A549 (cell line): ENCODE measurements at regions of chr17 and their contacts with region 1.

Region 1: GRCh38 chr17:50087246-50087911 is 7.8 kb upstream of the PDK2 start:
- DNase-seq: peak; percentile 87 to 93
- ATAC-seq: peak; percentile 76 to 93
- H3K4me3 ChIP-seq: no peak overlapping the region
- H3K27ac ChIP-seq: peak overlapping the region in 1 of 2 experiments; percentile 37; a peak in 2 of 6 replicates
- H3K4me1 ChIP-seq: no peaks in the 10 kb centered on the region
- CTCF ChIP-seq: peak; percentile 97
- EP300 ChIP-seq: no peak
- POLR2A ChIP-seq: no peak
- RAD21 ChIP-seq: peak; percentile 97 to 99

Region 2: DNA sequence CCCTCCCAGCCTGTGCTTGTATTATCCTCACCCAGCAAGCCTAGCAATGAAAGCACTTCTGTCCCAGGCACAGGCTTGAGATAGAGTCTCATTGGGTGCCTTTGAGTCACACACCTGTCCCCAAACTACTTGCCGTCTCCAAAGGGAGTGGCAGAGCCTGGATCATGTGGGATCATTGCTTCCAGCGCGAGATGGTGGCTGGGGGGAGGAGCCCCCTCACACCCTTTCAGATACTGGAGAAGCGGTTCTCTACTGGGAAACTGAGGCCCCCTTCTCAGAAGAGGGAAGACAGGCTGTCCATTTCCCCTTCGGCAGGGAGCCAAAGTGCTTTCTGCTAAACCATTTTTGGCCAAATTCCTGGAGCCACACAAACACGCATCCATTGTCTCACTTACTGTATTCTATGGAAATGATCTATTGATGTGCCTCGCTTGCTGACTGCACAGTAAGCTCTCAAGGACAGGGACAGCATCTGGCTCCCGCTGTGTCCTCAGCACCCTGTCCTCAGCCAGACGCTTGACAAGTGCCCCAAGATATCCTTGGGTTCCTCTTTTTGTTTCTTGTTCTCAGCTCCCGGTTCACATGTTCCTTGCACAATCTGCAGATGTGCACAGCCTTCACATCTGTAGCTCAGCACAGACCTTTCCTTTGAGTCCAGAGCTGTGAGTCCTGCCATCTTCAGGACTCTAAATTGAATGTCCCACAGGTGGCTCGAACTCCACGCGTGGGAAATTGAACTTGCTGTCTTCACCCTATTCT is 66.4 kb before region 1 on chr17:
- CTCF ChIA-PET with region 1: interaction called, 200 read pairs
- POLR2A ChIA-PET with region 1: no interaction called
- DNase-seq: no peak
- ATAC-seq: 0 out of 6 replicates have a peak, but pooled peaks of 1 of the 2 experiments have one; percentile 40
- H3K4me3 ChIP-seq: no peak overlapping the region
- H3K27ac ChIP-seq: no peak overlapping the region
- H3K4me1 ChIP-seq: peaks cover under 1% of the 10 kb centered on the region; the same call in 1 of the 3 replicates
- CTCF ChIP-seq: no peak
- EP300 ChIP-seq: no peak
- POLR2A ChIP-seq: no peak
- RAD21 ChIP-seq: no peak

Region 3: DNA sequence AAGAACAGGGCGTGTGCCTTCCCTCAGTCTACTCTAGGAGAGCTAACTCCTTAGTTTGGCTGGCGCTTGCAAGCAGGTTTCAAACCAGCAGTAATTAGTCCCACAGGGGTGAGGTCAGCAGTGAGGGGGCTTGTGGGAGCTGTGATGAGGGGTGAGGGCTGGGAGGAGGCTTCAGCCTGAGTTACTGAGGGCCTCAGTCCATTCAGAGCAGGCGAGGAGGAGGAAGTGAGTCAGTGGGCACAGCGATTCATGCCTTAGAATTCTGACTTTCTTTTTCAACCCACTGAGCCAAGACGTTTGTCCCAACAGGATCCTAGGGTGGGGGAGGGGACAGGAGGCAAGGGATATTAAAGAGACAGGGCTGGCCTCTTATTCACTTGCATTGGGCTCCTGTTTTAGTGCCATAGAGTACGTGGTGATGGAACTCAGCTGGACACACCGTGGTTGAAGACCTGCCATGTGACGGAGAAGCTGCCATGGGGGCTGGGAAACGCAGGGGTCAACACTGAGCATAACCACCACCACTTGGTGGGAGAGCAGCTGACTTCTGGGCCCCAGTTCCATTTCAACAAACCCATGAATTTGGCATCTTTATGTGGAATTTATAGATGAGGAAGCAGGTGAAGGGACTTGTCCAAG is 39.8 kb before region 1 on chr17:
- CTCF ChIA-PET with region 1: interaction called, 285 read pairs
- POLR2A ChIA-PET with region 1: interaction called, 5 read pairs
- DNase-seq: peak in 1 of 2 experiments; percentile 49
- ATAC-seq: peak in 1 of 2 experiments; percentile 5; a peak in 1 of 6 replicates
- H3K4me3 ChIP-seq: no peak overlapping the region
- H3K27ac ChIP-seq: peak overlapping the region; percentile 64 to 92
- H3K4me1 ChIP-seq: peaks cover 92% of the 10 kb centered on the region
- CTCF ChIP-seq: no peak
- EP300 ChIP-seq: no peak
- POLR2A ChIP-seq: no peak
- RAD21 ChIP-seq: no peak

Region 4: DNA sequence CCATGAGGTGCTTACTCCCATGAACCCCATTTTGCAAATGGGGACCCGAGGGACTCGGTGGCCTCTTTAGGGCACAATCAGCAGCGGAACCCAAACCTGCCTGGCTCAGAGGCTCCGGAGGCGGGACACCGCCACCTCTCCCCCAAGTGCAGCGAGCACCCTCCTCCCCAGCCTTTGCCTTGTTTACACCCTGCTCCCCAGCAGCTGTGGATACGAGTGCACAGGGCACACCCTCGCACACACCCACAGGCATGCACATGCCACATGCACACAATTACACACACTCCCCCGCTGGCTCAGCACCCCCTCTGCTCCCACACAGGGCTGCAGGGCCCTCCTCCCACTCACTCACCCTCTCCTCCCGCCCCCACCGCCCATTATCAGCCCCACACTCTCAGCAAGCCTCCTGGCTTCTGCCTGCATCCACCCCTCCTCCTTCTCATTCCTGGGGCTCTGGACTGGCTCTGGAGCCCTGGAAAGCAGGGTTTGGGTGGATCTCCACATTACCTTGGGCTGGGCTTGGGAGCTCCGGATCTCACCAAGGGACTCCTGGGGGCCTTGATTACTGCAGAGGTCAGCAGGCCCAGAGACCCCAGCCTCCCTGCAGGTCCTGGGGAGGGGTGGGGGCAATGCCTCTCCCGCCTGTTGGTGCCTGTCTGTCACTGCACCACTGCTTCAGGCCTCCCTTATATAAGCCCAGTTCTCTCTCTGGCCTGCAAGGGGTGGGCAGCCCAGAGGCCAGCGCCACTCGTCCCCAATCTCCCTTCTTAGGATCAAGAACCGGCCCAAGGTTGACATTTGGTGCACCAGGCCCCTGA is 14.2 kb after region 1 on chr17:
- CTCF ChIA-PET with region 1: interaction called, 1,356 read pairs
- POLR2A ChIA-PET with region 1: no interaction called
- DNase-seq: no peak
- ATAC-seq: peak; percentile 27 to 63
- H3K4me3 ChIP-seq: no peak overlapping the region
- H3K27ac ChIP-seq: peak overlapping the region in 1 of 2 experiments; percentile 68; a peak in 3 of 6 replicates
- H3K4me1 ChIP-seq: peaks cover 29% of the 10 kb centered on the region
- CTCF ChIP-seq: no peak
- EP300 ChIP-seq: no peak
- POLR2A ChIP-seq: no peak
- RAD21 ChIP-seq: no peak

Region 5: GRCh38 chr17:50123649-50124349 is 36.4 kb after region 1 on chr17:
- CTCF ChIA-PET with region 1: interaction called, 1,356 read pairs
- POLR2A ChIA-PET with region 1: no interaction called
- DNase-seq: no peak
- ATAC-seq: peak in 1 of 2 experiments; percentile 27; a peak in 3 of 6 replicates
- H3K4me3 ChIP-seq: no peak overlapping the region
- H3K27ac ChIP-seq: peak overlapping the region in 1 of 2 experiments; percentile 17; a peak in 1 of 6 replicates
- H3K4me1 ChIP-seq: peaks cover 10% of the 10 kb centered on the region; the same call in 1 of the 3 replicates
- CTCF ChIP-seq: no peak
- EP300 ChIP-seq: no peak
- POLR2A ChIP-seq: no peak
- RAD21 ChIP-seq: no peak